Activated naive CD8-positive, alpha-beta T cell treated with anti-CD3 and anti-CD28 coated beads, Interleukin-2, amount 10 ng/mL, durations not matched to agents 7 days and 5 days (primary cell): ENCODE measurements at regions of chrX and their contacts with region 1.

Region 1: DNA sequence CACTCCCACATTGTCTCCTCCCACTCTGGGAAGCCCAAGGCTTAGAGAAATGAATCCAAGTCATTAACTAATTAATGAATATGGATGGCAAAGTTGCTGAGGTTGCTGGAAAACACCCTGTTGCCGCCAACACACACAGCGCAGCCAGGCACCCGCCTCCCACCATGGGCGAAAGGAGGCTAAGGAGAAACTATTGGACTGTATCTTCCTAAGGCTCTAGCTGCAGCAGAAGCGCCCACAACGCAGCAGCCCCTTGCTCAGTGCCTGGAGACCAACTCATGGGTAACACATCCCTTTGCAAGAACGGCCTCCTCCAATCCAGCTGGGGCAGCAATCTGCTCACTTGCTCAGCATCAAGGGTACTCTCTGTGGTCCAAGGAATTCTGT is 34.2 kb downstream of the TSC22D3 start:
- DNase-seq: no peak
- ATAC-seq: peak; percentile 3
- H3K4me3 Mint-ChIP-seq: peak overlapping the region; percentile 82
- H3K27ac Mint-ChIP-seq: peak overlapping the region; percentile 100
- H3K4me1 Mint-ChIP-seq: peaks cover 12% of the 10 kb centered on the region
- H3K27me3 Mint-ChIP-seq: no peaks in the 10 kb centered on the region

Region 2: GRCh38 chrX:107672955-107673378 is 68.4 kb before region 1 on chrX:
- POLR2A ChIA-PET with region 1: interaction called, 16 read pairs
- DNase-seq: peak; percentile 66
- ATAC-seq: peak; percentile 44
- H3K4me3 Mint-ChIP-seq: peak overlapping the region; percentile 74
- H3K27ac Mint-ChIP-seq: peak overlapping the region; percentile 96
- H3K4me1 Mint-ChIP-seq: peaks cover 34% of the 10 kb centered on the region
- H3K27me3 Mint-ChIP-seq: no peaks in the 10 kb centered on the region

Region 3: DNA sequence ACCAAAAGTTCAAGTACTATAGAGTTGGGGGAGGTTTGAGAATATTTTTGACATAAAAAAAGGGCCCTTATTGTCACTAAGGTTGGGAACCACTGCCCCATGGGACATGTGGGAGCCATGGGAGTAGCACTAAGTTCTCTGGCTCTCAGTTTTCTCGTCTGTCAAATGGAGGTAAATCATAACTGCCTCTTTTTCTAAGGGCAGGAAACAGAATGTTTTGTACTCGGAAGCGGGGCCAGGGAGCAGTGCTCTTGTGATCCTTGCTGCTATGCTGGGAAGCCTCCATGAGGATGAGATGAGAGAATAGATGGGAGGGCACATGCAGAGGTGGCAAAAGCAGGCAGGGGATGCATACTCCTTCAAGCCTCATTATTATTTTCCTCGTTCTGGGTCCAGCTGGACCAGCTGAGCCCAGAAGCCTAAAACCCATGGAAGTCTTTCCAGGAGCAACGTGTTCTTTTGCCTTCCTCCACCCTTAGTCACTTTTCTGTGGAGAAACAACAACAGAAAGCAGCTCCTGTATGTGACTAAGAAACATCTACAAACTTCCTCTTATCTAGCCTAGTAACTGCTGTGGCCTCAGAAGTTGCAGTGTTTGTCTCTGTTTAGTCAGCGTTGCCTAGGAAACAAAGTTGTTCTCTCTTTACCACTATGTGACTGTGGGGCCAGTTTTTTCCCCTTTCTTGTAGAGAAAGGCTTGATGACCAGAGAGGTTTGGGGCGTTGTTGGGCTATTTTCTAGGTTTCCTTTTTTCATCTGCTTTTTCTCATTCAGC is 30.6 kb before region 1 on chrX:
- POLR2A ChIA-PET with region 1: interaction called, 43 read pairs
- DNase-seq: no peak
- ATAC-seq: peak; percentile 80
- H3K4me3 Mint-ChIP-seq: peak overlapping the region; percentile 73
- H3K27ac Mint-ChIP-seq: peak overlapping the region; percentile 94
- H3K4me1 Mint-ChIP-seq: peaks cover 21% of the 10 kb centered on the region
- H3K27me3 Mint-ChIP-seq: no peaks in the 10 kb centered on the region